ENCODE measurements at regions of chr14 and their contacts with region 1.

Region 1: DNA sequence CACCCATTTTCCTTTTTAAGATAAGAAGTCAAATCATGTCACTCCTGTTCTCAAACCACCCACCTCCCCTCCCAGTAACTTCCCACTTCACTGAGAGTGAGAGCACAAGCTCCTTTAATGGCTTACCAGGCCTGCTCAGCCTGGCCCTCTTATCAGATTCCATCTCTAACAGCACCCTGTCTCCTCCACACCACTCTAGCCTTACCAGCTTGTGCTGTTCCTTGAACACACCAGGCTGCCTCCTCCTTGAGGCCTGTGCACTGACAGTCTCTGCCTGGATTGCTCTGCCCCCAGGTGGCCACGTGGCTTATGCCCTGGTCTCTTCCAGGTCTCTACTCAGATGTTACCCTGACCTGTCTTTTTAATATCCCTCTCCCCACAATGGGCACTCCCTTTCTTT is 40.1 kb upstream of the EVL start:
- DNase-seq: peak; percentile 49 to 73
- ATAC-seq: peak; percentile 94 to 95
- H3K4me3 ChIP-seq: no peak overlapping the region
- H3K27ac ChIP-seq: peak overlapping the region; percentile 45 to 67; a peak in 4 of 6 replicates
- H3K4me1 ChIP-seq: peaks cover 41% of the 10 kb centered on the region
- CTCF ChIP-seq: peak; percentile 62
- EP300 ChIP-seq: no peak
- POLR2A ChIP-seq: no peak
- RAD21 ChIP-seq: peak; percentile 67 to 79

Region 2: DNA sequence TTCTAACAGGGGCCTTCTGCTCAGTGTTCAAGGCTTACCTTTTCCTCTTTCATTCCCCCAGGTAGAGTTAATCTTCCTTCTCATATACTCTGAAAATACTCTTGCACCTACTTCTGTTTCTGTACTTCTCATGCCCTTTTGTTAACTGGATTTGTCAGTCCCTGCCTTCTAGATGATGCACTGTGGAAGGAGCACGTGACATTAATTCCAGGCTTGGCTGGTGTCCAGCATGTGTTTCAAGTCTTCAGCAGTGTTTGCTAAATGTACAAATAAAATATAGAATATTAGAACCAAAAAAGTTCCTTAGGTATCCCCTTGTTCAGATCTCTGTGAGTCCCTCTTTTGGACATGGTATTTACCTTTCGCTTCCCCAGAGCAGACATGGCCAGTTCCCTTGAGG is 12.2 kb after region 1 on chr14:
- CTCF ChIA-PET with region 1: interaction called, 11 read pairs
- POLR2A ChIA-PET with region 1: no interaction called
- DNase-seq: no peak
- ATAC-seq: no peak
- H3K4me3 ChIP-seq: no peak overlapping the region
- H3K27ac ChIP-seq: peak overlapping the region in 1 of 2 experiments; percentile 13; a peak in 2 of 6 replicates
- H3K4me1 ChIP-seq: peaks cover 34% of the 10 kb centered on the region
- CTCF ChIP-seq: no peak
- EP300 ChIP-seq: no peak
- POLR2A ChIP-seq: no peak
- RAD21 ChIP-seq: no peak